A673 (cell line): ENCODE measurements at regions of chr3 and their contacts with region 1.

Region 1: GRCh38 chr3:48548729-48549705 is 7.6 kb downstream of the PFKFB4 start:
- DNase-seq: peak; percentile 61
- H3K4me3 ChIP-seq: no peak overlapping the region
- H3K27ac ChIP-seq: no peak overlapping the region
- H3K4me1 ChIP-seq: no peaks in the 10 kb centered on the region
- H3K27me3 ChIP-seq: no peaks in the 10 kb centered on the region
- CTCF ChIP-seq: peak; percentile 71

Region 2: GRCh38 chr3:48232734-48233133 is 316.3 kb before region 1 on chr3:
- CTCF ChIA-PET with region 1: no interaction called
- POLR2A ChIA-PET with region 1: no interaction called
- intact Hi-C with region 1: loop called (anchors 5 kb)
- DNase-seq: peak; percentile 85
- H3K4me3 ChIP-seq: no peak overlapping the region
- H3K27ac ChIP-seq: no peak overlapping the region
- H3K4me1 ChIP-seq: peaks cover 11% of the 10 kb centered on the region
- H3K27me3 ChIP-seq: no peaks in the 10 kb centered on the region
- CTCF ChIP-seq: peak; percentile 73

Region 3: GRCh38 chr3:48472915-48473616 is 76.0 kb before region 1 on chr3:
- CTCF ChIA-PET with region 1: no interaction called
- POLR2A ChIA-PET with region 1: no interaction called
- intact Hi-C with region 1: loop called (anchors 10 kb)
- DNase-seq: peak; percentile 91
- H3K4me3 ChIP-seq: peak overlapping the region; percentile 67
- H3K27ac ChIP-seq: peak overlapping the region; percentile 88
- H3K4me1 ChIP-seq: peaks cover 6% of the 10 kb centered on the region
- H3K27me3 ChIP-seq: no peaks in the 10 kb centered on the region
- CTCF ChIP-seq: no peak; the same call in 1 of the 2 replicates